Sigmoid colon (tissue), 7 donors: ENCODE measurements at regions of chr15 and their contacts with region 1.

Region 1: GRCh38 chr15:39686000-39686613 is 96.5 kb downstream of the FSIP1 start:
- DNase-seq: no peak
- H3K4me3 ChIP-seq: no peak overlapping the region
- H3K27ac ChIP-seq: no peak overlapping the region
- H3K4me1 ChIP-seq: peaks cover 0 to 30% (median 17%) of the 10 kb centered on the region in 4 donors
- H3K27me3 ChIP-seq: no peaks in the 10 kb centered on the region
- CTCF ChIP-seq: peak; percentile 35 to 84 (median 72)
- EP300 ChIP-seq: no peak
- POLR2A ChIP-seq: no peak

Region 2: GRCh38 chr15:38817427-38818156 is 868.5 kb before region 1 on chr15:
- intact Hi-C with region 1: loop called (anchors 10 kb)
- DNase-seq: peak; percentile 89
- H3K4me3 ChIP-seq: no peak overlapping the region
- H3K27ac ChIP-seq: peak overlapping the region in 1 of 4 donors; percentile 35
- H3K4me1 ChIP-seq: peaks cover 0 to 12% (median 6%) of the 10 kb centered on the region in 4 donors
- H3K27me3 ChIP-seq: no peaks in the 10 kb centered on the region
- CTCF ChIP-seq: peak; percentile 98 to 100 (median 99)
- EP300 ChIP-seq: no peak
- POLR2A ChIP-seq: no peak

Region 3: GRCh38 chr15:39381517-39381916 is 304.6 kb before region 1 on chr15:
- intact Hi-C with region 1: no loop called
- DNase-seq: no peak
- H3K4me3 ChIP-seq: no peak overlapping the region
- H3K27ac ChIP-seq: no peak overlapping the region
- H3K4me1 ChIP-seq: no peaks in the 10 kb centered on the region
- H3K27me3 ChIP-seq: no peaks in the 10 kb centered on the region
- CTCF ChIP-seq: no peak
- EP300 ChIP-seq: no peak
- POLR2A ChIP-seq: no peak

Region 4: GRCh38 chr15:39720621-39721611 is 34.8 kb after region 1 on chr15:
- intact Hi-C with region 1: no loop called
- DNase-seq: no peak
- H3K4me3 ChIP-seq: no peak overlapping the region
- H3K27ac ChIP-seq: no peak overlapping the region
- H3K4me1 ChIP-seq: no peaks in the 10 kb centered on the region
- H3K27me3 ChIP-seq: no peaks in the 10 kb centered on the region
- CTCF ChIP-seq: no peak
- EP300 ChIP-seq: no peak
- POLR2A ChIP-seq: no peak

Region 5: GRCh38 chr15:39756806-39757522 is 70.9 kb after region 1 on chr15:
- intact Hi-C with region 1: loop called (anchors 1 kb)
- DNase-seq: no peak
- H3K4me3 ChIP-seq: no peak overlapping the region
- H3K27ac ChIP-seq: no peak overlapping the region
- H3K4me1 ChIP-seq: no peaks in the 10 kb centered on the region
- H3K27me3 ChIP-seq: no peaks in the 10 kb centered on the region
- CTCF ChIP-seq: peak; percentile 27 to 88 (median 66)
- EP300 ChIP-seq: no peak
- POLR2A ChIP-seq: no peak

Region 6: DNA sequence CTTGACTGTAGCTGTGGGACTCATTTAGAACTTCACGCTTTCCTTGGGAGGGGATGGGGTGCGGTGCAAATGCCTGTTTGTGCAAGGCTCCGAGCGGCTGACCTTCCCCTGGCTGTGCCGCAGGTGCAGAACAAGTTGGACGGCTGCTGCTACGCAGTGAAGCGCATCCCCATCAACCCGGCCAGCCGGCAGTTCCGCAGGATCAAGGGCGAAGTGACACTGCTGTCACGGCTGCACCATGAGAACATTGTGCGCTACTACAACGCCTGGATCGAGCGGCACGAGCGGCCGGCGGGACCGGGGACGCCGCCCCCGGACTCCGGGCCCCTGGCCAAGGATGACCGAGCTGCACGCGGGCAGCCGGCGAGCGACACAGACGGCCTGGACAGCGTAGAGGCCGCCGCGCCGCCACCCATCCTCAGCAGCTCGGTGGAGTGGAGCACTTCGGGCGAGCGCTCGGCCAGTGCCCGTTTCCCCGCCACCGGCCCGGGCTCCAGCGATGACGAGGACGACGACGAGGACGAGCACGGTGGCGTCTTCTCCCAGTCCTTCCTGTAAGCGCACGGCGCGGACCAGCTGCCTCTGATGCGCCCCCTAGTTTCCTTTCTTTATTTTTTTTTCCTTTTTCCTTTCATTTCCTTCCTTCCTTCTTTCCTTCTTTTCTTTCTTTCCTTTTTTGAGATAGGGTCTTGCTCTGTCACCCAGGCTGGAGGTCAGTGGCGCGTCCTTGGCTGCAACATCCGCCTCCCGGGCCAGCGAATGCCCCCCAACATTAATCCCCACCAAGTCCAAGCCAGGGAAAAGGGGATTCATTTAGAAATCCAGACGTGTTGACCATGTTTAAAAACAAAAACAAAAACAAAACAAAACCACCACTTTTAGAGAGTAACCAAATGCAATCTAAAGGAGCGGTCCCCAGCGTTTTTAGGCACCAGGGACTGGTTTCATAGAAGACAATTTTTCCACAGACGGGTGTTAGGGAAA is 290.5 kb after region 1 on chr15:
- intact Hi-C with region 1: loop called (anchors 5 kb)
- DNase-seq: peak; percentile 82
- H3K4me3 ChIP-seq: peak overlapping the region; percentile 43 to 68 (median 62)
- H3K27ac ChIP-seq: peak overlapping the region; percentile 59 to 79 (median 78)
- H3K4me1 ChIP-seq: peaks cover 0 to 39% (median 17%) of the 10 kb centered on the region in 4 donors
- H3K27me3 ChIP-seq: no peaks in the 10 kb centered on the region
- CTCF ChIP-seq: peak; percentile 41 to 66 (median 60)
- EP300 ChIP-seq: no peak
- POLR2A ChIP-seq: no peak

Region 7: DNA sequence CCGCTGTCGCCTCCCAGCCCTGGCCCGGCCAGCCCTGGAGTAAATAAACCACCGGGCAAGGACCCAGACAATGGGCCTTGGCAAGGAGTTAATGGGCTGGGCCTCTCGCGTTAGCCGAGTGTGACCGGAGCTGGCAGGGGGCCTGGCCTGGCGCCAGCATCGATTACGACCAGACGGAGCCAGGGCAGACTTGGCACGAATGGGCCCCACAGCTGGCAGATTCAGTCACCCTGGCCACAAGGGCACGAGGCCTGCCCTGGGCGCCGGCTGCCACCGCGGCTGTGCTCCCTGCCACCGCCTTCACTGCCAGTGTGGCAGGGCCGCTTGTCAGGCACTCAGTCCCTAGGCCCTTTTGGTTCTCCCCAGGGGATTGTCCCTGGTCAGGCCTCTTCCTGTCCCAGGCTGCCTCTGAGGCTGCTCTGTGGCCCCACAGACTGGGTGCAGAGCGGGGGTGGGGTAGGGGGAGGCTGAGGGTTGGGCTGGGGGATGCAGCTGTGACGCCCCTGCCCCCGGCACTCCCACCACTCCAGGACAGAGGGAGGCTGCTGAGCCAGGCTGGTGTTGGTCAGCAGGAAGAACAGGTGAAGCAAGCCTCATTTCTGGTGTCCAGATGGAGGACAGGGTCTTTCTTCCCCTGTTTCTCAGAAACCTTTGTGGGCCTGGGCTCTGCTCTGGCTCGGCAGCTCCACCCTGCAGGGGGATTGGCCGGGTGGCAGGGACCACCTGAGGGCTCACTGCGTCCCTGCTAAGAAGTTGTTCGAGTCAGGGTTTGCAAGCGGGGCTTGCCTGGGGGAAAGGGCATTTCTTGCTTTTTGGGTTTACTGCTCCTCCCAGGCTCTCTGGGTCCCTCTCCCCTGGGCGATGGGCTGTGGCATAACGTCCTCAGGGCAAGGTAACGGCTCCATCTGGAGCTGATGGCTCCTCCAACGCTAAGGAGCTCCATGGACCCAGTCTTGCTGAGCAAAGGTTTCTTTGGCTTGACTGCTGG is 383.4 kb after region 1 on chr15:
- intact Hi-C with region 1: no loop called
- DNase-seq: peak; percentile 94
- H3K4me3 ChIP-seq: peak overlapping the region in 1 of 4 donors; percentile 6
- H3K27ac ChIP-seq: peak overlapping the region; percentile 61 to 77 (median 74)
- H3K4me1 ChIP-seq: peaks cover 0 to 27% (median 22%) of the 10 kb centered on the region in 4 donors
- H3K27me3 ChIP-seq: no peaks in the 10 kb centered on the region
- CTCF ChIP-seq: no peak
- EP300 ChIP-seq: no peak
- POLR2A ChIP-seq: no peak

Region 8: GRCh38 chr15:40160689-40161688 is 474.9 kb after region 1 on chr15 and contains the start of gene BUB1B:
- intact Hi-C with region 1: no loop called
- DNase-seq: peak; percentile 95
- H3K4me3 ChIP-seq: peak within 1 kb of the TSS; percentile 28 to 60 (median 50)
- H3K27ac ChIP-seq: no peak within 1 kb of the TSS
- H3K4me1 ChIP-seq: peaks cover 0 to 13% (median 6%) of the 10 kb centered on the region in 4 donors
- H3K27me3 ChIP-seq: no peaks in the 10 kb centered on the region
- CTCF ChIP-seq: no peak
- EP300 ChIP-seq: no peak
- POLR2A ChIP-seq: no peak
- total RNA-seq, gene BUB1B: 0.33 to 3.6 (median 1.2) TPM